ENCODE measurements at regions of chr5 and their contacts with region 1.

Region 1: GRCh38 chr5:66987949-66988838 is 208.4 kb downstream of the CD180 start:
- DNase-seq: no peak
- H3K4me3 ChIP-seq: no peak overlapping the region
- H3K27ac ChIP-seq: no peak overlapping the region
- H3K4me1 ChIP-seq: peaks cover 0 to 4% (median 2%) of the 10 kb centered on the region in 4 experiments; a peak in 4 of 7 replicates
- H3K27me3 ChIP-seq: no peaks in the 10 kb centered on the region
- CTCF ChIP-seq: peak in 2 of 3 experiments; percentile 30 to 64; a peak in 2 of 4 replicates
- EP300 ChIP-seq: no peak
- POLR2A ChIP-seq: no peak
- RAD21 ChIP-seq: peak; percentile 55 to 62

Region 2: GRCh38 chr5:66958980-66959641 is 29.1 kb before region 1 on chr5:
- CTCF ChIA-PET with region 1: interaction called, 23 read pairs
- POLR2A ChIA-PET with region 1: no interaction called
- DNase-seq: no peak
- H3K4me3 ChIP-seq: peak overlapping the region in 3 of 4 experiments; percentile 8 to 46 (median 22); a peak in 5 of 8 replicates
- H3K27ac ChIP-seq: no peak overlapping the region
- H3K4me1 ChIP-seq: peaks cover 0 to 12% (median 10%) of the 10 kb centered on the region in 4 experiments; a peak in 6 of 7 replicates
- H3K27me3 ChIP-seq: peaks cover 0 to 2% (median 0%) of the 10 kb centered on the region in 4 experiments; a peak in 1 of 7 replicates
- CTCF ChIP-seq: no peak
- EP300 ChIP-seq: no peak
- POLR2A ChIP-seq: no peak
- RAD21 ChIP-seq: no peak

Region 3: DNA sequence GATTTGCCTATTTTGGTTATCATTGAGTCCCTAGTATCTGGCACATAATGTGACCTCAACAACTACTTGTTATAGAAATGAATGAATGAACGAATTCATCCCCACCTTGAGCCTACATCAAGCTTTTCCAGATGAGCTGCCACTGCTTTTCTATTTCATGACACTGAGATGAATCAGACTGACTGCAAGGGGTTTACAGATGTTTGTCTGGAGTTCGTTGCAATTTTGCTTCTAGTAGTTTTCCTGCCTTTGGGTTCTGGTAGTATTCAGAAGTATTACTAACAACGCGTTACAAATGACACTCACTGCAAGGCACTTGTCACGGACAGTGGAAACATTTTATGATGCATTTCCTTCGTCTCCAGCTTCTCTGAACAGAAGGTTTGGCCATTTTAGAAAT is 13.9 kb before region 1 on chr5:
- CTCF ChIA-PET with region 1: interaction called, 32 read pairs
- POLR2A ChIA-PET with region 1: no interaction called
- DNase-seq: no peak
- H3K4me3 ChIP-seq: no peak overlapping the region
- H3K27ac ChIP-seq: no peak overlapping the region
- H3K4me1 ChIP-seq: no peaks in the 10 kb centered on the region
- H3K27me3 ChIP-seq: no peaks in the 10 kb centered on the region
- CTCF ChIP-seq: no peak
- EP300 ChIP-seq: no peak
- POLR2A ChIP-seq: no peak
- RAD21 ChIP-seq: no peak

Region 4: DNA sequence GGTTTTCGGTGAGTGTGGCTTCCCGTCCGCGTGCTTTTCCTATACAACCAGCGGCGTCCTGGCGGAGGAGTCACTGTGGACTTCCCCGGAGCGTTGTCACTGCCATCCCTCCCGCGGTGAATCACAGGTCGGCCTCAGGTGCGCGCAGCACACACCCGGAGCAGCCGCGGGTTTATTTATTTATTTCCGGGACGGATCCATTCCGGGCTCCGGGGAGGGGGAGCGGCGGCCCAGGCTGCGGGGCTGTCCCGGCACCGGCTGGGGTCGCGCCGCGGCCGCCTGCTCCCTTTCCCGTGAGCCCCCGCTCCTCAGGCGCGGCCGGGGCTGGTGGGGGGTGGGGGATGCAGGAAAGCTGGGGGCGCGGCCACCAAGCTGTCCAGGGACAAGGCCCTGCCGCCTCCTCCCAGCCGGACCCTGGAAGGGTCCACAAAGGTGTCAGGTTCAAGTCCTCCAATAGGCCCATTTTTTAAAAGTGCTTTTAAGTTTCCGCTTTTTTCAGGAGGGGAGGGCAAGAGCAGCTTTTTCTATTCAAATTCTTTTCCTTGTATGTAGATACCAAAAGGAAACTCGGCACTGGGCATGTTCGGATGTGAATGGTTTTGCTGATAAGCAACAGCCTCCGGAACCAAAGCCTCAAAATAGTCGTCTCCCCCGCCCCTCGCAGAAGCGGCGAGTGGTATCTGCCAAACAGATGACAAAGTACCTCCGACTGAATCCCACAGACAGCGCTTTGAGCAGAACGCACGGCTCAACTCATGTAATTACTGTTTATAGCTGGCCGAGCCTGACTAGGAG is 15.9 kb after region 1 on chr5:
- CTCF ChIA-PET with region 1: interaction called, 34 read pairs
- POLR2A ChIA-PET with region 1: interaction called, 15 read pairs
- DNase-seq: peak; percentile 62 to 84
- H3K4me3 ChIP-seq: peak overlapping the region; percentile 86 to 92 (median 87)
- H3K27ac ChIP-seq: no peak overlapping the region
- H3K4me1 ChIP-seq: peaks cover 0 to 4% (median 1%) of the 10 kb centered on the region in 4 experiments; a peak in 1 of 7 replicates
- H3K27me3 ChIP-seq: no peaks in the 10 kb centered on the region
- CTCF ChIP-seq: 0 out of 4 replicates have a peak, but pooled peaks of 1 of the 3 experiments have one; percentile 5
- EP300 ChIP-seq: peak in 1 of 2 experiments; percentile 59; a peak in 1 of 3 replicates
- POLR2A ChIP-seq: peak in 1 of 2 experiments; percentile 54
- RAD21 ChIP-seq: peak in 1 of 2 experiments; percentile 16; a peak in 1 of 4 replicates